WTC11 (cell line): ENCODE measurements at regions of chr10 and their contacts with region 1.

Region 1: GRCh38 chr10:121696854-121697253 is 98.6 kb upstream of the FGFR2 start:
- DNase-seq: peak; percentile 87
- ATAC-seq: peak; percentile 87
- H3K4me3 Mint-ChIP-seq: no peak overlapping the region
- H3K27ac Mint-ChIP-seq: no peak overlapping the region
- H3K4me1 Mint-ChIP-seq: peaks cover 14% of the 10 kb centered on the region
- H3K27me3 Mint-ChIP-seq: 0 out of 2 replicates have a peak, but pooled peaks cover 3% of the 10 kb centered on the region
- CTCF ChIP-seq: peak; percentile 70

Region 2: GRCh38 chr10:121654021-121654545 is 42.8 kb before region 1 on chr10:
- CTCF ChIA-PET with region 1: no interaction called
- POLR2A ChIA-PET with region 1: no interaction called
- DNase-seq: no peak
- ATAC-seq: no peak
- H3K4me3 Mint-ChIP-seq: no peak overlapping the region
- H3K27ac Mint-ChIP-seq: no peak overlapping the region
- H3K4me1 Mint-ChIP-seq: peaks cover 16% of the 10 kb centered on the region
- H3K27me3 Mint-ChIP-seq: no peaks in the 10 kb centered on the region
- CTCF ChIP-seq: no peak

Region 3: DNA sequence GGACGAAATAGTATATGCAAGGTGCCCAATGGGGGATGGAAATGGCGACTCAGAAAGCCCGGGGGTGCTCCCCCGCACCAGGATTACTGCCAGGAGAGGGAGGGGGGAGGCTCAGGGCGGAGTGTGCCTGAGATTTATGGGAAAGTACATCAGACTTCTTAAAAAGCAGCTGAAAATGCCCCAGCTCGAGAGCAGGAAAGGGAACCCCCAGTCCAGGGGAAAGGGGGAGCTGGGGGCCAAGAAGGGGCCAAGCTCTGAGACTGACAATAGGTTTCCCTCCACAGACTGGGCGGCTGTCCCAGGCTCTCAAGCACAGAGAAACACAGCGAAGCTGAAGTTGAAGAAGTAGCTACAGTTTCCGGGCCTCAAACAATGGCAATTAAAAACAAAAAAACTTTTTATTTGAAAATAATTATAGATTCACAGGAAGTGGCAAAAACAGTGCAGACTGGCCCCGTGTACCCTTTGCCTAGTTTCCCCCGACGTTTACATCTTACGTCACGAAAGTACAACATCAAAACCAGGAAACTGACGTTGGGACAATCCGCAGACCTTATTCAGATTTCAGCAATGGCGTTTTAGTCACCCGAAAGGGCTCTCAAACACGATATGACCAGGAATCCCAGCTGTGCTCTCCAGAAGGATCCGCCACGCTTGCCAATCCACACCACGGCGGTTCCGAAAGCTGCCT is 14.7 kb before region 1 on chr10:
- CTCF ChIA-PET with region 1: interaction called, 13 read pairs
- POLR2A ChIA-PET with region 1: no interaction called
- DNase-seq: no peak
- ATAC-seq: no peak
- H3K4me3 Mint-ChIP-seq: no peak overlapping the region
- H3K27ac Mint-ChIP-seq: no peak overlapping the region
- H3K4me1 Mint-ChIP-seq: peaks cover 23% of the 10 kb centered on the region
- H3K27me3 Mint-ChIP-seq: no peaks in the 10 kb centered on the region; the same call in 1 of the 2 replicates
- CTCF ChIP-seq: no peak

Region 4: DNA sequence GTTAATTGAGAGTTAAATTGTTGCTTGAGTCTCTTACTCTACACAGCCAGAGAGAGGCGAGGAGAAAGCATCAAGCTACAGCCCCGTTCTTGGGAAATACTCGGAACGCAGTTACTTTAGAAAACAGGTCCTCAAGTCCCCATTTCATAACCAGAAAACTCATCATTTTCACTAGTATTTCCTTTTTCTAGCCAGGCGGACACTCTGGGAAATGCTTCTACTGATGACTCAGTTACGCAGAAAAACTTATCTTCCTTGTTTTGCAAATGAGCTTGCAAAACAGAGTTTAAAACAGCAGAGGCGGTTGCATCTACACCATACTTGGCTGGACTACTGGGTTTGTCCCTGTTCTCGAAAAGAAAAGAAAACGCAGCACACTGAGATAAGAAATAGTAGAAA is 12.8 kb after region 1 on chr10:
- CTCF ChIA-PET with region 1: interaction called, 17 read pairs
- POLR2A ChIA-PET with region 1: no interaction called
- DNase-seq: no peak
- ATAC-seq: peak; percentile 26; the same call in 1 of the 2 replicates
- H3K4me3 Mint-ChIP-seq: peak overlapping the region; percentile 26; the same call in 1 of the 2 replicates
- H3K27ac Mint-ChIP-seq: peak overlapping the region; percentile 26
- H3K4me1 Mint-ChIP-seq: peaks cover 32% of the 10 kb centered on the region
- H3K27me3 Mint-ChIP-seq: no peaks in the 10 kb centered on the region
- CTCF ChIP-seq: no peak

Region 5: DNA sequence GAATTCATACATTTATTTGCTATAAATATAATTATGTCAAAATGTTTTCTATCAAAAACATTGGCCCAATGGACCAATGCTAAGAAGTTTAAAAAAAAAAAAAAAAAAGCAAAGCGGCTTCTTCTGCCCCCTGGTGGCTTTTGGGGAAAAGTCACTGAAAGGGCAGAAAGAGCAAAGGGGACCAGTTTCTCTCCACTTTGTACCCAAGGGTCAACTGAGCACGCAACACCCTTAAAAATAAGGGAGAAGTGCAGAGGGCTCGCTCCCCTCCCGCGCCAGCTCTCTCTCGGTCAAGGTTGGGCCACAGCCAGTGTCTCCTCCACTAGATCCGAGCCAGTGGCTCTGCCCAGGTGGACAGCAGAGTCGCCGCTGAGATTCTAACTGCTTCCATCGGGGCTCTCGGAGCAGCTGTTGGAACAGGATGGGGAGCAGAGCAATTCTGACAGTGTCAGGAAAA is 37.8 kb after region 1 on chr10:
- CTCF ChIA-PET with region 1: interaction called, 14 read pairs
- POLR2A ChIA-PET with region 1: no interaction called
- DNase-seq: peak; percentile 25
- ATAC-seq: peak; percentile 62
- H3K4me3 Mint-ChIP-seq: no peak overlapping the region
- H3K27ac Mint-ChIP-seq: no peak overlapping the region
- H3K4me1 Mint-ChIP-seq: peaks cover 35% of the 10 kb centered on the region
- H3K27me3 Mint-ChIP-seq: peaks cover 9% of the 10 kb centered on the region
- CTCF ChIP-seq: peak; percentile 41